ENCODE measurements at regions of chr3 and their contacts with region 1.

Region 1: DNA sequence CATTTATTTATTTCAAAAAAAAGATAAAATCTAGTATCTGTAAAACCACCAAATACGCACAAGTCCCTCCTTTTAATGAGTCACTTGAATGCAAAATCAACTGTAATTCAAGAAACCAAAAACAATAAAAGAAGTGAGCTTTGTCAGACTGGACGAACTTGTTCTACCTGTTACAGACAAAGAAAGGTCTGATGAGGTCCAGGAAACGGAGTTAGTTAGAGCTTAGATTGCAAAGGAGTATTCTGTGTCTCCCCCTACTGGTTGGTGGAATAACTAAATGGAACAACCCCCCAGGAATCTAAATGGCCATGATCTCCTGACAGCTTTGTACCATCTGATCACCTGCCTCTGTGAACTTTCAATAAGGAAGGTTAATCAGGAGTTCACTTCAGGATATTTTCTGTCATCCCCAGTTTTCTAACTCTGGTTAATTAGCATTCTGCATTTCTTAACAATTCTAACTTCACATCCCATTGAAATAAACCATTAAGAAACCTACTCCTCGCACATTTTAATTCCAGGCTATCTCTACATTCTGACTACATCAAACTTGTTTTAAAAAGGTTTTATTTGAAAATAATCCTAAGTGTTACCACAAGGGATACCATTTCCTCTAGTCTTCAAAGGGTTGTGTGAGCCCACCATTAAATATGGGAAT is 333.0 kb upstream of the SATB1 start:
- DNase-seq: peak in 2 of 4 donors; percentile 46 to 84
- ATAC-seq: peak; percentile 98
- H3K4me3 ChIP-seq: no peak overlapping the region
- H3K27ac ChIP-seq: no peak overlapping the region
- H3K4me1 ChIP-seq: no peaks in the 10 kb centered on the region
- H3K27me3 ChIP-seq: no peaks in the 10 kb centered on the region
- CTCF ChIP-seq: peak; percentile 51 to 66

Region 2: DNA sequence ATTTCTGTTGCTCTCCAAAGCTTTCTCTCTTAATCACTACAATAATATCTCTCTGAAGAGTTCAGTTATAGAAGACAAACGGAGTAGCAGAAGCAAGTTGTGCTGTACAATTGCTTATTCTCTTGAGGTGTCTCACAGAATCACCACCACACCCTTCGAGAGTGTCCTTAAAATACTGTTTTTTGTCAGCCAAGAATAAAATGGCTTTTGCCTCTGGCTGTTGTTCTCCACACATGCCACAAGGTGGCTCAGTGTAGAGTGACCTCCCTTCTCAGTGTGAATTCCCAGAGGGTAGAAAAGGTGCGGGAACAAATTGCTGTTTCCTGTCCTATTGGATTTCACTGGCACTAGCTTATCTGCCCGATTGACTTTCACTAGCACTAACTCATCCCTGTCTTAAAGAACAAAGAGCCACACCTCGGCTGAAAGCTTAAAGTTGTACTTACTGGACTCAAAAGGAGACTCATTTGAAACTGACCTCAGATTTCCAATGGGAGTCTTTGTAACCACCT is 198.8 kb before region 1 on chr3:
- intact Hi-C with region 1: loop called in 1 of 2 experiments (anchors 10 kb)
- DNase-seq: peak in 2 of 4 donors; percentile 7 to 26
- ATAC-seq: peak; percentile 86
- H3K4me3 ChIP-seq: no peak overlapping the region
- H3K27ac ChIP-seq: no peak overlapping the region
- H3K4me1 ChIP-seq: no peaks in the 10 kb centered on the region
- H3K27me3 ChIP-seq: no peaks in the 10 kb centered on the region
- CTCF ChIP-seq: peak; percentile 67 to 72

Region 3: GRCh38 chr3:18679238-18679637 is 78.9 kb before region 1 on chr3:
- intact Hi-C with region 1: no loop called
- DNase-seq: no peak
- ATAC-seq: no peak
- H3K4me3 ChIP-seq: no peak overlapping the region
- H3K27ac ChIP-seq: no peak overlapping the region
- H3K4me1 ChIP-seq: no peaks in the 10 kb centered on the region
- H3K27me3 ChIP-seq: no peaks in the 10 kb centered on the region
- CTCF ChIP-seq: no peak

Measured in left lung (tissue), 14 donors.